Motor neuron (in vitro differentiated cells): ENCODE measurements at regions of chr22 and their contacts with region 1.

Region 1: DNA sequence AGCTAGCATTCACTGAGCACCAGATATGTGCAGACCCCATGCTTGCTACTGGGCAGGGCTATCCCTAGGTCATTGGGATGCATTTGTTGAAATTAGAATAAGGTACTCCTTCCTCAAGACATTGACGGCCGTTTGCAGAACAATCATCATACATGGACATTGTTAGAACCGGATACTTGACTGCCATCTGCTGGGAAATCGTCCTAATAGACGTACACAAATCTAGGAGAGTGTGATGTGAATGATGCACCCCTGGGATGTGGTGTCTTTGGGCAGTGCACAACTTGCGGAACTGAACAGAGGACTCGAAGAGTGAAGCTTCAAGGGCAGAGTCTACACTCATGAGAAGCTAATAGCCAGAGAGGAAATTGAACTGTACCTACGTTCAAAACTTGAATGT is 35.9 kb downstream of the MYO18B start:
- ATAC-seq: peak in 3 of 8 experiments; percentile 73 to 81 (median 77)
- H3K4me3 ChIP-seq: no peak overlapping the region
- H3K27ac ChIP-seq: no peak overlapping the region
- H3K4me1 ChIP-seq: peaks cover 9 to 10% of the 10 kb centered on the region in 2 donors

Region 2: DNA sequence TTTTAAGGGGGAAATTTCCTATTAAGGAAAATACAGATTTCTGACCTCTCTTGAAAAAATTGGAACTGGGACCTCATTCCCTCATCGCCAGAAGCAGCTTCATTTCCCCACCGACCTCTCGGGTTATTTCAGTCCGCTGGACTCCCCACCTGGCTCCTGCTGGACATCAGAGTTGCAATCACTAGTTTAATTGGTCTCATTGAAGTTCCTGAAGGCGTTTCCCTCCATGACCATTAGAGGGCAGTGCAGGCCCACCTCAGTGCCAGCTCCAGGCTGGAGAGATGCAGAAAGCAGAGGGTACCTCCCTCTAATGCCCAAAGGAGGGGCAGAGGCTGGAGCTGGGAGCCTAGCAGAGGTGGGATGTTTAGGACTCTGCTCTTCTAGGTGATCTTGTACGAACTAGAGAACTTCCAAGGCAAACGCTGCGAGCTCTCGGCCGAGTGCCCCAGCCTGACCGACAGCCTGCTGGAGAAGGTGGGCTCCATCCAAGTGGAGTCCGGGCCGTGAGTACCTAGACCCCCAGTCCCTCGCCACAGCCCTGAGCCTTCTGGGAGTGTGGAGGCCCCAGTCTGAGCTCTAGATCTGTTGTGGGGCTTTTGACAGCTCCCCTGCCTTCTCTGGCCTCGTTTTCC is 575.5 kb before region 1 on chr22:
- in situ Hi-C with region 1: loop called in 2 of 9 experiments (anchors 25 kb)
- ATAC-seq: peak; percentile 60 to 91 (median 74)
- H3K4me3 ChIP-seq: no peak overlapping the region
- H3K27ac ChIP-seq: no peak overlapping the region
- H3K4me1 ChIP-seq: peaks cover 3% of the 10 kb centered on the region in 2 donors

Region 3: GRCh38 chr22:25452116-25452700 is 325.7 kb before region 1 on chr22:
- in situ Hi-C with region 1: loop called in 1 of 9 experiments (anchors 25 kb)
- ATAC-seq: peak in 1 of 8 experiments; percentile 20
- H3K4me3 ChIP-seq: no peak overlapping the region
- H3K27ac ChIP-seq: no peak overlapping the region
- H3K4me1 ChIP-seq: peaks cover 14 to 18% of the 10 kb centered on the region in 2 donors

Region 4: GRCh38 chr22:25465949-25466348 is 311.9 kb before region 1 on chr22:
- in situ Hi-C with region 1: loop called in 2 of 9 experiments (anchors 10 to 25 kb)
- ATAC-seq: peak in 2 of 8 experiments; percentile 27 to 83
- H3K4me3 ChIP-seq: no peak overlapping the region
- H3K27ac ChIP-seq: no peak overlapping the region
- H3K4me1 ChIP-seq: no peaks in the 10 kb centered on the region

Region 5: DNA sequence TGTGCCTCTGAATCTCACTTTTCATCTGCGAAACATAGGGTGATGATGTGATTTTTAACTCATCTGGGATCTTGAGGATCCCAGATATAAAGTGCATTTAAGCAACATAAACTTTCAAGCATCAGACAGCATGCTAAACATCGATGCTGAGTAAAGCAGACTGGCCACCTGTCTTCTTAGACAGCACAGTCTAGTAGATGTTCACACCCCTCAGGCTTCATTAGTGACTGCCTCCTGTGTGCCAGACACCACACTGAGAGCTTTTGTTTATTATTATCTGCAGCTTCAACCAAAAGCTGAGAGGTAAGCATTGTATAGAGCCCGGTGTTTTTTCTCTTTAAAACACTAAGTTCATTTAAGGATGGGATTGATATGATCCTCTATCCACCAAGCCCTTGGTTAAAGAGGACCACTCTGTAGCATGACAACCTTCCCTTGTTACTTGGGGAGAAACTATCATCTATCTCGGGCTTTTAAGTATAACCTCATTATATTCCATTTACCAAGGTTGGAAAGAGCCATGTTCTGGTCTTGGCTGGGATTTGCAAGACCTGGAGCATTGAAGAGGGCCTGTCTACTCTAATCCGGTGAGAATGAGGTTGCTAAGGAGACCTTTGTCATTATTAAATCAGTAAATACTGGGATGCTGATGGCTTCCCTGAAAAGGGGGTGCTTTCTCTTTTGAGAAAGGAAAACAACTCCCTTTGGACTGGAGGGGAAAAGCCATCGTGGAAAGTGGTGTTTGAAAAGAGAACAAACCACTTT is 277.2 kb after region 1 on chr22:
- in situ Hi-C with region 1: no loop called
- ATAC-seq: no peak
- H3K4me3 ChIP-seq: no peak overlapping the region
- H3K27ac ChIP-seq: no peak overlapping the region
- H3K4me1 ChIP-seq: peaks cover 23 to 24% of the 10 kb centered on the region in 2 donors